HCT116 (cell line): ENCODE measurements at regions of chr3 and their contacts with region 1.

Region 1: DNA sequence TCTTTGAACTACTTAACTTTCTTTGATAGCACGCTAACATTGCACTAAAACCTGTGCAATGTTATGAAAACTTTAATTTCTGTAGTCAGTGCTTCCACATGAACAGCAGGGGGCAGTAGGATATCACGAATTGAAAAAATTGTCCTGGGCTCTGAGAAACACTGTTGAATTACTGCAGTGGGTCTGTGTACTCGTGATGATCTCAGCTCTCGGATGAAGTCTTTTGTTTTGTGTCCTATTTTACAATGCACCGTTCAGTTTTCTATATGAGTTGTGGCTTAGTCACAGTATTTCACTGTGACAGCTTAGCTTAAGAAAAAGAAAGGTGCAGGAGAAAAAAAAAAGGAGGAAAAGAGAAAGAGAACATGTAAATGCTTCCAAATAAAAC is 141.3 kb upstream of the CCDC54 start:
- DNase-seq: peak; percentile 68
- ATAC-seq: peak; percentile 57
- H3K4me3 ChIP-seq: peak overlapping the region; percentile 52 to 60
- H3K27ac ChIP-seq: no peak overlapping the region
- H3K4me1 ChIP-seq: peaks cover 0 to 18% of the 10 kb centered on the region in 2 experiments; a peak in 3 of 4 replicates
- H3K27me3 ChIP-seq: no peaks in the 10 kb centered on the region
- CTCF ChIP-seq: peak; percentile 69 to 97 (median 88)
- POLR2A ChIP-seq: no peak
- RAD21 ChIP-seq: peak; percentile 93

Region 2: GRCh38 chr3:107543666-107544065 is 307.7 kb after region 1 on chr3:
- CTCF ChIA-PET with region 1: interaction called, 8 read pairs
- POLR2A ChIA-PET with region 1: no interaction called
- RAD21 ChIA-PET with region 1: no interaction called
- intact Hi-C with region 1: loop called (anchors 2 kb)
- DNase-seq: no peak
- ATAC-seq: peak; percentile 46; the same call in 1 of the 2 replicates
- H3K4me3 ChIP-seq: no peak overlapping the region
- H3K27ac ChIP-seq: no peak overlapping the region
- H3K4me1 ChIP-seq: no peaks in the 10 kb centered on the region
- H3K27me3 ChIP-seq: no peaks in the 10 kb centered on the region
- CTCF ChIP-seq: peak; percentile 19 to 60 (median 32); a peak in 3 of 6 replicates
- POLR2A ChIP-seq: no peak
- RAD21 ChIP-seq: peak; percentile 58

Region 3: DNA sequence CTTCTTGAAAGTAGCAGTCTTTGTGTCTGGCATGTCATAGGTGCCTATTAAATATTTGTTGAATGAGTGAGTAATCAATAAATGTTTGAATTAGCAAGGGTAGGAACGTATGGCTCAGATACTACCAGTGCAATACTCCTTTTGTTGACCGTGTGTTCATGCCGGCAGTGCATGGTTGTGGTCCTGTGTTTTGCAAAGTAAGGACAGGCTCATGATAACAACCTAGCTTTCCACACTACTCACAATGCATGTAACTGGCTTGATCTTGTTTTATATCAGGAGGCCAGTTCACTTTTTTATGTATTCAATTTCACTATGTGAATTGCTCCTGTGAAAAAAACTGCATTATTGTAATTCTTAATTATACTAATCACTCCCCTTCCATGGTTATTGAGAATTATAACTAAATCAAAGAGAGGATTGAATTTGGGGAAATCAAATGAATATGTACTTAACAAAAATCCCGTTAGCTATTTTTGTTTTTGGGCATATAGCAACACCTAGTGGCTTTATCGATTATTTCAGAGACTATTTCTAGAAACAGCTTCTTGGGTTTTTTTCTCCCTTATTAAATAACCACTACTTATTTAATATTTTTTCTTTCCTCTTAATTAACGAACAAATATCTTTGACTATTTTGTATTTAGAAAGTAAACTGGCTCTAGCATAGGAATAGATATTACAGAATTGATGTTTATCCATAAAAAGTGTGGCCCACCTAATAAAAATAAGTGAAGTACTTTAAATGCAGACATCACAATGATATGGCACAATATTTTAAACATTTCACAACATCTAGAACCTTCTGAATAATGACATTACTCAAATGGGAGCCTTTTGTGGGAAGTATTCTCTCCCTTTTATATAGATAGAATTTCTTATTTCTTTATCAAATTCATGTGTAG is 505.3 kb after region 1 on chr3:
- CTCF ChIA-PET with region 1: interaction called, 7 read pairs
- POLR2A ChIA-PET with region 1: no interaction called
- RAD21 ChIA-PET with region 1: no interaction called
- intact Hi-C with region 1: loop called (anchors 1 kb)
- DNase-seq: no peak
- ATAC-seq: no peak
- H3K4me3 ChIP-seq: no peak overlapping the region
- H3K27ac ChIP-seq: no peak overlapping the region
- H3K4me1 ChIP-seq: no peaks in the 10 kb centered on the region
- H3K27me3 ChIP-seq: no peaks in the 10 kb centered on the region
- CTCF ChIP-seq: peak; percentile 19 to 55 (median 35); a peak in 3 of 6 replicates
- POLR2A ChIP-seq: no peak
- RAD21 ChIP-seq: peak; percentile 51

Region 4: GRCh38 chr3:107927361-107928083 is 691.6 kb after region 1 on chr3:
- CTCF ChIA-PET with region 1: no interaction called
- POLR2A ChIA-PET with region 1: no interaction called
- RAD21 ChIA-PET with region 1: no interaction called
- intact Hi-C with region 1: loop called (anchors 2 kb)
- DNase-seq: peak; percentile 53
- ATAC-seq: peak; percentile 99
- H3K4me3 ChIP-seq: peak overlapping the region; percentile 51 to 62
- H3K27ac ChIP-seq: no peak overlapping the region
- H3K4me1 ChIP-seq: peaks cover 0 to 14% of the 10 kb centered on the region in 2 experiments; a peak in 2 of 4 replicates
- H3K27me3 ChIP-seq: no peaks in the 10 kb centered on the region
- CTCF ChIP-seq: peak; percentile 67 to 95 (median 93)
- POLR2A ChIP-seq: no peak
- RAD21 ChIP-seq: peak; percentile 70